Activated T-helper 1 cell treated with anti-CD3 and anti-CD28 coated beads, Interleukin-12 subunit alpha, Interleukin-12 subunit beta, Interleukin-2, Interleukin-4 antibody, amounts not matched to agents 30 ng/mL and 10 ng/mL and 1 ng/mL, durations not matched to agents 14 hours and 24 hours and 36 hours (primary cell): ENCODE measurements at regions of chrX and their contacts with region 1.

Region 1: DNA sequence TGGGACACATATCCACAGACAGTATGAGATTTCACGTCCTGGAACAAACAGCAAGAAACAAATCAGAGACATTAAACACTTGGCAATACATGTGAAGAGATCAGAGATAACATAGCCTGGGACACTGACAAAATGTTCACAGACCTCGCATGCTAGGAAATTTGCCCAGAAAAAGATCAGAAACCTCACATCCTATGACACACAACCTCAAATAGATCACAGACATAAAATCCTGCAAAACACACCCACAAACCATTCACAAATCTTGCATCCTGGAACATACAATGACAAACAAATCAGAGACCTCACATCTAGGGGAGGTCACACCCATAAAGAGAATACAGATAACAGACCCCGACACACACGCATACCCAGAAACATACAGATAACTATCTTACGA is 18.0 kb downstream of the SUV39H1 start:
- DNase-seq: no peak
- H3K4me3 Mint-ChIP-seq: peak overlapping the region; percentile 50
- H3K27ac Mint-ChIP-seq: peak overlapping the region; percentile 84
- H3K4me1 Mint-ChIP-seq: peaks cover 75% of the 10 kb centered on the region
- H3K27me3 Mint-ChIP-seq: no peaks in the 10 kb centered on the region

Region 2: GRCh38 chrX:48631350-48632090 is 83.1 kb before region 1 on chrX:
- intact Hi-C with region 1: no loop called
- DNase-seq: peak; percentile 69
- H3K4me3 Mint-ChIP-seq: peak overlapping the region; percentile 19
- H3K27ac Mint-ChIP-seq: no peak overlapping the region
- H3K4me1 Mint-ChIP-seq: peaks cover 3% of the 10 kb centered on the region
- H3K27me3 Mint-ChIP-seq: no peaks in the 10 kb centered on the region

Region 3: DNA sequence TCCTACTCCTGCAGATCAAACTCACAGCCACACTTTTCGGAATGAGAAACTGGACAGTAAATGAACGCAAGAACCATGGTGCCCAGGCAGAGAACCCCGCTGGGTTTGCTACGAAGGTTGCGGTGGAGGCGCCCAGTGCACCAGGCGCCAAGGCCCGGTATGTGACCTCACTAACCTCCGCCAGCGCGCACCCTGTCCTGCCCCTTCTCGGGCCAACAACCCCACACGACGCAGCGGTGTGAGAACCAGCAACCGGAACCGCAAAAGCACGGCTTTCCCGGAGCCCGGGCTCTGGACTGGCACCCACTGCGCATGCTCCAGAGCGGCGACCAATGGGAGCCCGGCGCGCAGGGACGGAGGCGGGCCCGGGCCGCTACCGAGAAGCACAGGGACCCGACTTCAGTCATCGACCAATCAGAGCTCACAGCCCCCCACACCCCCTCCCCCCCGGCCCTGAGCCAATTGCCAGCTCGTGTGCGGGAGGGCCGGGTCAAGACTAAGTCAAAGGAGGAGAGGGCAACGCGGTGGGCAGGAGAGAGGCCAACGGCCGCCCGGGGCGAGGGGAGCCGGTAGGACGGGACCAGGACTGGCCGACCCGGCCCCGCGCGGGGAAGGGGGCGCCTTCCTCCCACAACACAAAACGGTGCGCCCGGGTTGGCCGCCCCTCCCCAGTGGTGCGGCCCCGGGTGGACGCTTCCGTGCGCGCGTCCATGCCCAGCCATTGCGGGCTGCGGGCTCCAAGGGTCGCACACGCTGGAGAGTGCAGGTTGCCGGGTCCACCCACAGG is 38.3 kb before region 1 on chrX:
- intact Hi-C with region 1: loop called (anchors 2 kb)
- DNase-seq: peak; percentile 87
- H3K4me3 Mint-ChIP-seq: peak overlapping the region; percentile 86
- H3K27ac Mint-ChIP-seq: peak overlapping the region; percentile 88
- H3K4me1 Mint-ChIP-seq: peaks cover 20% of the 10 kb centered on the region
- H3K27me3 Mint-ChIP-seq: no peaks in the 10 kb centered on the region

Region 4: GRCh38 chrX:48751343-48751742 is 36.8 kb after region 1 on chrX:
- intact Hi-C with region 1: loop called (anchors 5 kb)
- DNase-seq: peak; percentile 0
- H3K4me3 Mint-ChIP-seq: no peak overlapping the region
- H3K27ac Mint-ChIP-seq: peak overlapping the region; percentile 46
- H3K4me1 Mint-ChIP-seq: peaks cover 7% of the 10 kb centered on the region
- H3K27me3 Mint-ChIP-seq: no peaks in the 10 kb centered on the region

Region 5: GRCh38 chrX:48937054-48937907 is 222.7 kb after region 1 on chrX:
- intact Hi-C with region 1: loop called (anchors 5 kb)
- DNase-seq: peak; percentile 85
- H3K4me3 Mint-ChIP-seq: peak overlapping the region; percentile 87
- H3K27ac Mint-ChIP-seq: peak overlapping the region; percentile 97
- H3K4me1 Mint-ChIP-seq: peaks cover 80% of the 10 kb centered on the region
- H3K27me3 Mint-ChIP-seq: no peaks in the 10 kb centered on the region